AG04450 (cell line): ENCODE measurements at regions of chr6 and their contacts with region 1.

Region 1: GRCh38 chr6:144769142-144769541 is 484.0 kb downstream of the UTRN start:
- DNase-seq: no peak
- H3K4me3 ChIP-seq: no peak overlapping the region
- H3K27ac ChIP-seq: no peak overlapping the region
- H3K27me3 ChIP-seq: no peaks in the 10 kb centered on the region
- CTCF ChIP-seq: no peak

Region 2: DNA sequence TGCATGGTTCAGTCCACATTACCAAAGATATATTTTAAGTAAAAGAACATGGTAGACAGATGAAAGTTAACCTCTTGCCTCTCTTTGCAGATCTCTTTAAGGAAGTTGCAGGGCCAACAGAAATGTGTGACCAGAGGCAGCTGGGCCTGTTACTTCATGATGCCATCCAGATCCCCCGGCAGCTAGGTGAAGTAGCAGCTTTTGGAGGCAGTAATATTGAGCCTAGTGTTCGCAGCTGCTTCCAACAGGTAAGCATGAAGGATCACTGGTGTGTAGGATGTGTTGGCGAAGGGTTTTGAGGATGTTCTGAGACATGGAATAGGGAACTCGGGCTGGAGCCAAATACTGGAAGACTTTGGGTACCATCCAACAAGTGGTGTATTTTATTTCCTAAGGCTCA is 24.6 kb after region 1 on chr6:
- CTCF ChIA-PET with region 1: no interaction called
- POLR2A ChIA-PET with region 1: no interaction called
- DNase-seq: no peak
- H3K4me3 ChIP-seq: no peak overlapping the region
- H3K27ac ChIP-seq: no peak overlapping the region
- H3K27me3 ChIP-seq: no peaks in the 10 kb centered on the region
- CTCF ChIP-seq: no peak

Region 3: DNA sequence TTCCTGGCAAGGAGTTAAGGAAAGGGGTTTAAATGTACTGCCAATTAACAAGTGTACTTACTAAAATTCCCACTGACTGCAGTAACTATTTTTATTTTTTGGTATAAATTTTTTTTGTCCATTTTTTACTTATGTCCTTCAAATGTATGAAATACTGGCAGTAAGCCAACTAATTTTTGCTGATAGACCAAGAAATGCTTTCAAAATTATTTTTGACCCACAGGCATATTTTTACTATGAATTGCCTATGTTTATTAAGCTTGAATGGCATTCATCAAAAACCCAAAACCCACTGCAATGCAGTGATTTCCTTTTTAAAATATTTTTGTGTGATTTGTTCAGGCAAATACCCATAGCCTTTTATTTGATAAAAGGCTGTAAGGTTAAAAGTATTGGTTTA is 76.0 kb after region 1 on chr6:
- CTCF ChIA-PET with region 1: interaction called, 3 read pairs
- POLR2A ChIA-PET with region 1: interaction called, 12 read pairs
- DNase-seq: no peak
- H3K4me3 ChIP-seq: no peak overlapping the region
- H3K27ac ChIP-seq: no peak overlapping the region
- H3K27me3 ChIP-seq: no peaks in the 10 kb centered on the region
- CTCF ChIP-seq: no peak